IMR-90 (cell line): ENCODE measurements at regions of chr5 and their contacts with region 1.

Region 1: DNA sequence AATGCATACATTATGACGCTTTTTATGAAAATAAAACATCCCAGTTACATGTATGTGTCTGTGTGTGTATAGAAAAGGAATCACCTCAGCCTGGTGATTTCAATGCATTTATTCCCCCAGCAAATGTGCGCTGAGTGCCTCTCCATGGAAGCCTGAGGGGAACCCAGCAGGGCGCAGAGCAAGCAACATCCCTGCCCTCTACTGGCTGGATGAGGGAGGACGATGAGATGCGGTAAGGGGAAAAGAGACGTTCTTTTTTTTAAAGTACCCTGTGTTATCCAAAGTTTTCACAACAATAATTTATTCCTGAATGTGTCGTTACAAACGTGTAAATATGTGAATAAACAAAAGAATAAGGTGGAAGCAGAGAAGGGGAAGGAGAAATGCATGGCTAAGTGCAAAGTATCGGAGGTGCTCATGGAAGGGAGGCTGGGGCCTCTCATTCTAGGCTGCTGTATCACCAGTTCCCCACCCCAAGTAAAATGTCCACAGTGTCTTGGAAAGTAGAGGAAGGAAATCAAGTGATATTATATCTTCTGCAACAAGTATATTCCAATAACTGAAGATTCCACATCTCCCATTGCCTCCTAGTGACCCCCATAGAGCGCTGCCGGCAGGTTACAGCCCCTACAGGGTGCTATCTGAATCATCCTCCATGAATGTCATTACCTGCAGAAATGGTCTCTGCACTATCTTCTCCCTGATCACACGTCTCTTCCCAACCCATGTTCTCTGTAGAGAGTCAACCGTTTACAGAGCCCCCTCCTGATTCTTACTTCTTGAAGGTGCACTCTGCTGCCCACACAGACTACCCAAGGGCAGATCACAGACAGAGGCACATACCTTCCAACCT is 13.0 kb upstream of the ABLIM3 start:
- DNase-seq: peak; percentile 41
- ATAC-seq: peak; percentile 80
- H3K4me3 ChIP-seq: no peak overlapping the region
- H3K27ac ChIP-seq: no peak overlapping the region
- H3K4me1 ChIP-seq: peaks cover 10% of the 10 kb centered on the region
- H3K27me3 ChIP-seq: no peaks in the 10 kb centered on the region
- CTCF ChIP-seq: peak; percentile 65
- POLR2A ChIP-seq: no peak
- RAD21 ChIP-seq: peak; percentile 51

Region 2: DNA sequence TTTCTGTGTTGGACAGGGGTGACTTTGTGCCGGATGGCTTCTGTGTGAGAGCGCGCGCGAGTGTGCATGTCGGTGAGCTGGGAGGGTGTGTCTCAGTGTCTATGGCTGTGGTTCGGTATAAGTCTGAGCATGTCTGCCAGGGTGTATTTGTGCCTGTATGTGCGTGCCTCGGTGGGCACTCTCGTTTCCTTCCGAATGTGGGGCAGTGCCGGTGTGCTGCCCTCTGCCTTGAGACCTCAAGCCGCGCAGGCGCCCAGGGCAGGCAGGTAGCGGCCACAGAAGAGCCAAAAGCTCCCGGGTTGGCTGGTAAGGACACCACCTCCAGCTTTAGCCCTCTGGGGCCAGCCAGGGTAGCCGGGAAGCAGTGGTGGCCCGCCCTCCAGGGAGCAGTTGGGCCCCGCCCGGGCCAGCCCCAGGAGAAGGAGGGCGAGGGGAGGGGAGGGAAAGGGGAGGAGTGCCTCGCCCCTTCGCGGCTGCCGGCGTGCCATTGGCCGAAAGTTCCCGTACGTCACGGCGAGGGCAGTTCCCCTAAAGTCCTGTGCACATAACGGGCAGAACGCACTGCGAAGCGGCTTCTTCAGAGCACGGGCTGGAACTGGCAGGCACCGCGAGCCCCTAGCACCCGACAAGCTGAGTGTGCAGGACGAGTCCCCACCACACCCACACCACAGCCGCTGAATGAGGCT is 302.1 kb before region 1 on chr5 and contains the start of gene ADRB2:
- CTCF ChIA-PET with region 1: no interaction called
- POLR2A ChIA-PET with region 1: no interaction called
- dilution Hi-C with region 1: no loop called
- in situ Hi-C with region 1: no loop called
- intact Hi-C with region 1: loop called (anchors 5 kb)
- DNase-seq: peak; percentile 91
- ATAC-seq: peak; percentile 98
- H3K4me3 ChIP-seq: peak within 1 kb of the TSS; percentile 67
- H3K27ac ChIP-seq: peak within 1 kb of the TSS; percentile 70
- H3K4me1 ChIP-seq: peaks cover 13% of the 10 kb centered on the region
- H3K27me3 ChIP-seq: no peaks in the 10 kb centered on the region
- CTCF ChIP-seq: no peak
- POLR2A ChIP-seq: peak; percentile 94
- RAD21 ChIP-seq: no peak
- total RNA-seq, gene ADRB2: 3.4 and 4.4 TPM in 2 replicates

Region 3: DNA sequence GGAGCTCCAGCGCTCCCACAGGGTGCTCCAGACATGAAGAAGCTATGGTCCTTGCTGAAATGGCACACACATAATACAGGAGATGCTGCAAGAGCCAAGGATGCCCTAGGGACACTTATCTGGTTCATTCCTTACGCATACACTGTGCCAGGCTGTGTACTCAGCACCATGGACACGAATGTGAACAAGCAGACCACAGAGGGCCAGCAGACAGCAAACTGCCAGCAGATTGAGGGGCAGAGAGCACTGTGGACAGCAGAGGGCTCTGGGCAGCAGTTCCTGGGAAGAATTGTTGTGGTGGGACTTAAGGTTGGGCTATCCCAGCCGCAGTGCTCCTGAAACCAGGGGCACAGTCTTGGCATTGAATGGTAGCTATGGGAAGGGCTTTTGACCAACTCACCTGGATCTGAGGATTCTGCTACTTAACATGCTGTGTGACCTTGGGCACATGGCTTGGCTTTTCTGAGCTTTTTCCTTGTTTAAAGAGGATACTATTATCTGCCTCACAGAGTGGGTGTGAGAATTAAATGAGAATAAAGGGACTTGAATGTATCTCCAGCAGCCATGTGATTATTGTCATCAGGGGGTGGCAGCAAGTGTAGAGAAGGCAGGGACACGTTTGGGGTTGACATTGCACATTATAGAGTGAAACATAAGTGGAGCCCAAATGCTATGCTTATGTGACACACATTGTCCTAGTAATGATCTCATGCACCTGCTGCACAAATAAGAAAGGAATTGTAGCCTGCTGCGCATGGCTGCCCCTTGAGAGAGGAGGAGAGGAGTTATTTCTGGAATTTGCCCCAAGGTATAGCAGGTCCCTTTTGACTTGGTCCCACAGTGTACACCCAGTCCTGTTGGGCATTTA is 632.0 kb after region 1 on chr5:
- CTCF ChIA-PET with region 1: no interaction called
- POLR2A ChIA-PET with region 1: no interaction called
- dilution Hi-C with region 1: no loop called
- in situ Hi-C with region 1: no loop called
- intact Hi-C with region 1: loop called (anchors 5 kb)
- DNase-seq: no peak
- ATAC-seq: no peak; the same call in 1 of the 2 replicates
- H3K4me3 ChIP-seq: no peak overlapping the region
- H3K27ac ChIP-seq: no peak overlapping the region
- H3K4me1 ChIP-seq: no peaks in the 10 kb centered on the region
- H3K27me3 ChIP-seq: peaks cover 52% of the 10 kb centered on the region
- CTCF ChIP-seq: no peak
- POLR2A ChIP-seq: no peak
- RAD21 ChIP-seq: no peak